ENCODE measurements at regions of chr3 and their contacts with region 1.

Region 1: DNA sequence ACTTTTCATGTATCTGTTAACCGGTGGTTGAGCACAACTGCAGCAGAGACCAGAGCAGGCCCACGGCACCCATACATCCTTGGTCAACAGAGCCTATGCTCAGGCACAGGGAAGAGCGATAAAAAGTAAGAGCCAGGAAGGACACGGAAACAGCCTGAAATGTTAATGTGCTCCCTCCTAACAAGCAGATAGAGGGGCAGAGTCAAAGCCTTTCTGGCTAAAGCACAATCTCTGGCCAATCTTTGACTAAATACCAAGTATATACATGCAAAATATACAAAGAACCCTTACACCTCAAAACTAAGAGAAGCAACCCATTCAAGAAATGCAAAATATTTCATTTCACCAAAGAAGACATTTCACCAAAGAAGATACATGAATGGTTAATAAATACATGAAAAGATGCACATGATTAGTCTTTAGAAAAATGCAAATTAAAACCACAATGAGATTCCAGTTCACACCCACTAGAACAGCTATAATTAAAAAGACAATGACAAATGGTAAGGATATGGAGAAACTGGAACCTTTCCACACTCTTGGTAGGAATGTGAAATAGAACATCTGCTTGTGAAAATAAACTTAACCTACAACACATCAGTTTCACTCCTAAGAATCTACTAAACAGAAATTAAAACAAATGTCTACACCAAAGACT is 88.0 kb downstream of the OSBPL10 start:
- DNase-seq: no peak
- H3K4me3 ChIP-seq: no peak overlapping the region
- H3K27ac ChIP-seq: peak overlapping the region; percentile 38
- H3K4me1 ChIP-seq: peaks cover 55% of the 10 kb centered on the region
- H3K27me3 ChIP-seq: no peaks in the 10 kb centered on the region
- CTCF ChIP-seq: no peak

Region 2: GRCh38 chr3:31639828-31640227 is 253.2 kb before region 1 on chr3:
- CTCF ChIA-PET with region 1: no interaction called
- dilution Hi-C with region 1: no loop called
- in situ Hi-C with region 1: no loop called
- intact Hi-C with region 1: no loop called
- DNase-seq: no peak
- H3K4me3 ChIP-seq: no peak overlapping the region
- H3K27ac ChIP-seq: no peak overlapping the region
- H3K4me1 ChIP-seq: no peaks in the 10 kb centered on the region
- H3K27me3 ChIP-seq: no peaks in the 10 kb centered on the region
- CTCF ChIP-seq: no peak

Region 3: DNA sequence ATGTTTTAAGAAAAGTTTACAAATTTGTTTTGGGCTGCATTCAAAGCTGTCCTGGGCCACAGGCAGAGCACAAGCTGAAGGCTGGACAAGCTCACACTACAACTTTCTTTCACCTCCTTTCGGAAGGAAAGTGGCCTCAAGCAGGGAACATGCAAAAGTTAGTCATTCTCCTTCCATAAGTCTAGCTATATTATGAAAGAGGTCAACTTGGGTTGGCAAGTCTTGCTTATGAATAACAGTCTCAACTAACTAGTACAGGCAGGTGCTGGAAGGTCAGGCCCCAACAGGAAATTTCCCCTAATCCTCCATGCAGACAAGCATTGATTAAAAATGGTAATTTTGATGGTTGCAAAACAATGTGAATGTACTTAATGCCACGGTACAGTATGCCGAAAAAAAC is 18.6 kb after region 1 on chr3:
- CTCF ChIA-PET with region 1: no interaction called
- dilution Hi-C with region 1: no loop called
- in situ Hi-C with region 1: no loop called
- intact Hi-C with region 1: loop called (anchors 2 kb)
- DNase-seq: peak; percentile 92
- H3K4me3 ChIP-seq: no peak overlapping the region
- H3K27ac ChIP-seq: peak overlapping the region; percentile 62
- H3K4me1 ChIP-seq: peaks cover 28% of the 10 kb centered on the region
- H3K27me3 ChIP-seq: no peaks in the 10 kb centered on the region
- CTCF ChIP-seq: no peak

Region 4: DNA sequence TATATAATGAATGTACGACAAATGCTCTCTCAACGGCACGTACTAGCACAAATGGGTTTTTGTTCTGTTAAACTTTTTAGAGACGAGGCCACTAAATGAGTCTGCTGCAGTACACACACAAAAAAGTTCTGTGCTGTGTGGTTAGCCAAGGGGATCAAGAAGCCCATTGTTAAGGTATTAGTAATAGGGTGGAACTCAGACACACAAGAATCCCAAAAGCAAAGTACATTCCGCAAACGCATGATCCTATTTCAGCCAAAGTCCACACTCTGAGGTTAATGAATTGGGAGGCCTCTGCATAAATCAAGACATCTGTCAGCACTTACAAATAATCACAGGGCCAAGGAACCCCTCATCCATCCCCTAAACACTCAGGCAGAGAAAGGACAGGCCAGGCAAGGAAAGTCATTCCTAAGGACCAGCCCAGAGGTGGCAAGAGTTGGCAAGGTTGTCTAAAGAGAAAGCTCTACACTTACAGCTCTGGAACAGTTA is 75.9 kb after region 1 on chr3:
- CTCF ChIA-PET with region 1: no interaction called
- dilution Hi-C with region 1: no loop called
- in situ Hi-C with region 1: loop called in 1 of 2 experiments (anchors 10 kb)
- intact Hi-C with region 1: no loop called
- DNase-seq: peak; percentile 97
- H3K4me3 ChIP-seq: peak overlapping the region in 2 of 3 experiments; percentile 21 to 29
- H3K27ac ChIP-seq: peak overlapping the region; percentile 99
- H3K4me1 ChIP-seq: peaks cover 38% of the 10 kb centered on the region
- H3K27me3 ChIP-seq: no peaks in the 10 kb centered on the region
- CTCF ChIP-seq: no peak